ENCODE measurements at regions of chr2 and their contacts with region 1.

Region 1: GRCh38 chr2:113959202-113959601 is 69.3 kb downstream of the ACTR3 start:
- DNase-seq: no peak
- H3K4me3 ChIP-seq: no peak overlapping the region
- H3K27ac ChIP-seq: no peak overlapping the region
- H3K4me1 ChIP-seq: no peaks in the 10 kb centered on the region
- H3K27me3 ChIP-seq: no peaks in the 10 kb centered on the region
- CTCF ChIP-seq: no peak

Region 2: GRCh38 chr2:113739849-113740248 is 219.4 kb before region 1 on chr2:
- intact Hi-C with region 1: loop called (anchors 10 kb)
- DNase-seq: no peak
- H3K4me3 ChIP-seq: no peak overlapping the region
- H3K27ac ChIP-seq: no peak overlapping the region
- H3K4me1 ChIP-seq: no peaks in the 10 kb centered on the region
- H3K27me3 ChIP-seq: no peaks in the 10 kb centered on the region
- CTCF ChIP-seq: no peak

Region 3: GRCh38 chr2:113756355-113757137 is 202.7 kb before region 1 on chr2 and contains the start of gene SLC35F5:
- intact Hi-C with region 1: no loop called
- DNase-seq: peak; percentile 88 to 95
- H3K4me3 ChIP-seq: peak within 1 kb of the TSS; percentile 63 to 72
- H3K27ac ChIP-seq: peak within 1 kb of the TSS; percentile 90 to 94
- H3K4me1 ChIP-seq: peaks cover 0 to 42% (median 16%) of the 10 kb centered on the region in 4 donors
- H3K27me3 ChIP-seq: no peaks in the 10 kb centered on the region
- CTCF ChIP-seq: no peak

Region 4: DNA sequence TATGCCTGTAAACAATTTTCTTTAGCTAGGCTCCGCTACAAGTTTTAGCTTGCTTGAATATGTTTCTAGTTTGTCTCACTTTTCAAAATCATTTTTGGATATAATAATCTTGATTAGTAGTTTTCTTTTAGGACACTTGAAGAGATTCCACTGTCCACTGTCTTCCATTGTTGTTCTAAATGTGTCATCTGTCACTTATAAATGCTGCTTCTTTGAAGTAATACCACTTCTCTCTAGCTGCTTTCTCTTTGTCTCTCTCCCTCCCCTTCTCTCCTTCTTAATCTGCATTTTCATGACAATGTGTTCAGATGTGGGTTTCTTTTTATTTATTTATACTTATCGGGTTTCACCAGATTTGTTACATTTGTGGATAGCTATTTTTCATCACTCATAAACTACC is 409.5 kb after region 1 on chr2:
- intact Hi-C with region 1: no loop called
- DNase-seq: no peak
- H3K4me3 ChIP-seq: no peak overlapping the region
- H3K27ac ChIP-seq: no peak overlapping the region
- H3K4me1 ChIP-seq: no peaks in the 10 kb centered on the region
- H3K27me3 ChIP-seq: no peaks in the 10 kb centered on the region
- CTCF ChIP-seq: no peak

Region 5: DNA sequence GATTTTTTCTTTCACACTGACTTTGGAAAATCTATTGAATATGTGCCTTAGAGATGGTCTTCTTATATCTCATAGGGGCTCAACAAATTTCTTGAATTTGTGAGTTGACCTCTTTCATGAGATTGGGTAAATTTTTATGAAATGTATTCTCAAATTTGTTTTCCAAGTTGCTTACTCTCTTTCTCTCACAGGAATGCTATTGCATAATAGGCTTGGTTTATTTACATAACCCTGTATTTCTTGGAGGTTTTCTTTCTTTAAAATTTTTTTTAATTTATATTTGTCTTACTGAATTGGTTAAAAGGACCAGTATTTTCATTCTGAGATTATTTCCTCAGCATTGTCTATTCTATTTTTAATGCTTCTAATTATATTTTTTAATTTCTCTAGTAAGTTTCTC is 1400.3 kb after region 1 on chr2:
- intact Hi-C with region 1: no loop called
- DNase-seq: no peak
- H3K4me3 ChIP-seq: no peak overlapping the region
- H3K27ac ChIP-seq: no peak overlapping the region
- H3K4me1 ChIP-seq: no peaks in the 10 kb centered on the region
- H3K27me3 ChIP-seq: no peaks in the 10 kb centered on the region
- CTCF ChIP-seq: no peak

Measured in tibial artery (tissue), 4 donors.